ENCODE measurements at regions of chr2 and their contacts with region 1.

Region 1: GRCh38 chr2:73163483-73164367 is 38.6 kb upstream of the NOTO start:
- DNase-seq: peak; percentile 84
- H3K4me3 ChIP-seq: no peak overlapping the region
- H3K27ac ChIP-seq: no peak overlapping the region
- H3K4me1 ChIP-seq: peaks cover 2% of the 10 kb centered on the region
- H3K27me3 ChIP-seq: no peaks in the 10 kb centered on the region
- CTCF ChIP-seq: peak; percentile 86 to 89
- POLR2A ChIP-seq: no peak

Region 2: DNA sequence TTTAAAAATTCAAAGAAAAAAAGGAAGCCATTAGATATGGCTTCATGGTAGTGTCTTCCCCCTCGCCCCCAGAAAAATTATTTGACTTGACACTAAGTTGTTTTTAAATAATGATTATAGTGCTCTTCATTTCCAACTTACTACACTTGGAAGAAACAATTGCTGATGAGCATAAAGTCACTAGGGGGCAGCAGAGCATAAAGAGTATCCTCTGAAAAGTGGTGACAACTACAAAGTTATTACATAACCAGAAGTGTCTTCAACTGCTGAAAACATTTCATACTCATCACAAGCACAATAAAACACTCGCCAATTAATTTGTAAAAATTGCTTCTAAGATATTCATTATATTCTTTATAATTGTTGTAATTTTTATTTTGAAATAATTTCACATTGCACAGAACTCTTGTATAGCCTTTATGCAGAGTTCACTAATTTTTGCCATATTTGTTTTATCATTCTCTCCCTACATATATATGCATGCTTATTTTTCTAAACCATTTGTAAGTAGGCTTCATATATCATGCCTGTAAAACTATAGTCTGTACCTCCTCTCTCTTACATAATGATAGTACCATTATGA is 392.8 kb before region 1 on chr2:
- CTCF ChIA-PET with region 1: no interaction called
- POLR2A ChIA-PET with region 1: no interaction called
- dilution Hi-C with region 1: no loop called
- intact Hi-C with region 1: loop called (anchors 1 kb)
- DNase-seq: peak; percentile 84
- H3K4me3 ChIP-seq: no peak overlapping the region
- H3K27ac ChIP-seq: no peak overlapping the region
- H3K4me1 ChIP-seq: no peaks in the 10 kb centered on the region
- H3K27me3 ChIP-seq: no peaks in the 10 kb centered on the region
- CTCF ChIP-seq: peak; percentile 54 to 71
- POLR2A ChIP-seq: no peak

Region 3: GRCh38 chr2:72973566-72974435 is 189.9 kb before region 1 on chr2:
- CTCF ChIA-PET with region 1: interaction called, 12 read pairs
- POLR2A ChIA-PET with region 1: no interaction called
- dilution Hi-C with region 1: no loop called
- intact Hi-C with region 1: no loop called
- DNase-seq: peak; percentile 46
- H3K4me3 ChIP-seq: no peak overlapping the region
- H3K27ac ChIP-seq: no peak overlapping the region
- H3K4me1 ChIP-seq: no peaks in the 10 kb centered on the region
- H3K27me3 ChIP-seq: no peaks in the 10 kb centered on the region
- CTCF ChIP-seq: peak; percentile 80 to 92
- POLR2A ChIP-seq: no peak

Region 4: GRCh38 chr2:72993147-72993932 is 170.4 kb before region 1 on chr2:
- CTCF ChIA-PET with region 1: interaction called, 15 read pairs
- POLR2A ChIA-PET with region 1: no interaction called
- dilution Hi-C with region 1: no loop called
- intact Hi-C with region 1: loop called (anchors 1 kb)
- DNase-seq: peak; percentile 51
- H3K4me3 ChIP-seq: no peak overlapping the region
- H3K27ac ChIP-seq: no peak overlapping the region
- H3K4me1 ChIP-seq: no peaks in the 10 kb centered on the region
- H3K27me3 ChIP-seq: no peaks in the 10 kb centered on the region
- CTCF ChIP-seq: peak; percentile 57 to 70
- POLR2A ChIP-seq: no peak

Region 5: DNA sequence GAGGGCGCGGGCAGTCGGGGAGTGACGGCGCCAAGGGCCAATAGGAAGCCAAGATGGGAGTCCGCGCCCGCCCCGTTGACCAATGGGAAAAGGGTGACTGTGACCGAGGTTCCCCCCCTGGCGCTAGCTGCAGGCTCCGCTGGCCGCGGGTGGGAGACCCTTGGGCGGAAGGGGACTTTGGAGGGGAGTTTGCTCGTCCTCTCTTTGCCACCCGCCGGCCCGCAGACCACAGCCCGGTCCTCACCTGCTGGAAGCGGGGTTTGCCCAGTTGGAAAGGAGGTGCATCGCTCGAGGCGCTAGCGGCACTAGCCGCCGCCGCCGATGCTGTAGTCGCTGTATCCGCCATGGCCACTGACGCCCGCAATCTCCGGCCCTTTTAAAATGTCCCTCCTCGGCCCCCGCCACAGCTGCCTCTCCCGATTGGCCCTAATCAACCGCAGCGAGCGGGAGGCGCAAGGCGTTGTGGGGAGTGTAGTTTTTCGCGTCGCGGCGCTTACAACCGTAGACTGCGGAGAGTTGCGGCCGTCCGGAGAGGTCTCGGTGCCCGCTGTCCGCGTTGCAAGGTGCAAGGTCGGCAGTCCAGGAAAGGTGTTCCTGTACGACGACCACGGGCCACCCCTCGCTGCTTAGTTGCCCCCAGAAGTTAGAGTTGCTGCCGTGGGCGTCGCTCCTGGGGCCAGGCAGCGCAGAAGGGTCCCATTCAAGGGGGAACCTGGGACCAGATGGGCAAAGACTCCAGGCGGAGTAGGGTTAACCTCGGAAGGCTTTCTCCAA is 92.2 kb before region 1 on chr2 and contains the start of gene SFXN5:
- CTCF ChIA-PET with region 1: no interaction called
- POLR2A ChIA-PET with region 1: no interaction called
- dilution Hi-C with region 1: no loop called
- intact Hi-C with region 1: loop called (anchors 1 kb)
- DNase-seq: peak; percentile 94
- H3K4me3 ChIP-seq: peak within 1 kb of the TSS; percentile 77 to 86 (median 80)
- H3K27ac ChIP-seq: peak within 1 kb of the TSS; percentile 75
- H3K4me1 ChIP-seq: peaks cover 12% of the 10 kb centered on the region
- H3K27me3 ChIP-seq: no peaks in the 10 kb centered on the region
- CTCF ChIP-seq: peak in 1 of 2 donors; percentile 23
- POLR2A ChIP-seq: peak; percentile 71
- total RNA-seq, gene SFXN5: 24.6 and 28.6 TPM in 2 replicates

Region 6: DNA sequence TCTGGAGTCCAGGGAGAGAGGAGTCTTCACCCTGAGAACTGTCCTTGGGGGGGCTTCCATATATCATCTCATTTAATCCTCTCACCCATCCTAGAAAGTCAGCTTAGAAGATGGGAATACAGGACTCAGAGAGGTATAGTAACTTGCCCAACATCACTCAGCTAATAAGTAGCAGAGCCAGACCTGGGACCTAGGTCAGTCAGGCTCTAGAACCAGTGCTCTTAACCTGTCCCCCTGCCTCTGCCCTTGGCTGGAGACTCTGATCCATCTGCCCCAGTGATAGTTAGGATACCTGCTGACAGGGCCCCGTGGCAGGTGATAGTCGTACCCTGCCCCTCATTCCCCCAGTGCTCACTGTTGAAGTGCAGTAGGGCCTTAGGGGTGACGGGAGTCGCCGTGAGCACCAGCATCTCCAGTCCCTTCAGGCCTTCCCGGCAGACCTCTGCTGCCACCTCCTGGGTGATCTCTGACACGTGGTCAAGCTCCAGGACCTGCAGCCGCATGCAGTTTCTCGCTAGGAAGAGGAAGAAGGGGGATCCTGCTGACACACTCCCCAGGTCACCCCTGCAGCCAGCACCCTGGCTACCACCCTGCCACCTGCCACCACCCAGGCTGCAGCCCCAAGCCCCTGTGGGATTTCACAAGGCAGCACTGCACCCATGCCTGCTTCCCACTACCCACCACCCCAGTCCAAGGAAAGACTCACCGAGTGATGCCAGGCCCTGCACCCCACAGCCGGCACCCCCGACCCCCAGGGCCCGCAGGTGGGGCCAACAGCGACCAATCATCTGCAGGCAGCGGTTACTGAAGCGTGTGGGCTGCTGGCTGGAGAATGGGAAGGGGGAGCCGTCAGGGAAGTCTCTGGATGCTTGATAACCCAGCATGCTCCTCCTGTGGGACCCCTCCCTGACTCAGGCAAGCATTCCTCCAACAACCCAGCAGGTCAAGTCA is 96.6 kb after region 1 on chr2:
- CTCF ChIA-PET with region 1: no interaction called
- POLR2A ChIA-PET with region 1: no interaction called
- dilution Hi-C with region 1: no loop called
- intact Hi-C with region 1: loop called (anchors 5 kb)
- DNase-seq: peak; percentile 43
- H3K4me3 ChIP-seq: no peak overlapping the region
- H3K27ac ChIP-seq: no peak overlapping the region
- H3K4me1 ChIP-seq: no peaks in the 10 kb centered on the region
- H3K27me3 ChIP-seq: no peaks in the 10 kb centered on the region
- CTCF ChIP-seq: peak; percentile 39 to 64
- POLR2A ChIP-seq: no peak